ENCODE measurements at regions of chrX and their contacts with region 1.

Region 1: GRCh38 chrX:109709129-109709631 is 23.9 kb downstream of the ACSL4 start:
- DNase-seq: no peak
- H3K4me3 Mint-ChIP-seq: peak overlapping the region; percentile 45
- H3K27ac Mint-ChIP-seq: peak overlapping the region; percentile 73
- H3K4me1 Mint-ChIP-seq: peaks cover 54% of the 10 kb centered on the region
- H3K27me3 Mint-ChIP-seq: no peaks in the 10 kb centered on the region

Region 2: DNA sequence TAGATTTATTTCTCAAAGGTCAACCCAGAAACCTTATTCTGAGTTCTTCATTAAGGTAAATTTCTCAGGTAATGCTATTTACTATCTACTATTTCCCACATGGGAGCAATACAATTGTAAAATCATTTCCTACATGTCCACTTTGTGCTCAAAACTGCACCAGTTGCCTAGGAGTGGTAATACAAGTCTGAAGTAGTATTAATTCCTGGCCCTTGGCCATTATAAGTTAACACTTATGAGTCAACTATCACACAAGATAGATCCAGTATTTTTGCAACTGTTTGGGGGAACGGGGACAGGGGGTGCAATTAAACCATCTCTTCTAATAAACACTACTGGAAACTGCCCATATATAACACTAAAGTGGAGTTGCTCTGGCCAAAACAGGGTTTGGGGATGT is 25.0 kb before region 1 on chrX:
- intact Hi-C with region 1: no loop called
- DNase-seq: no peak
- H3K4me3 Mint-ChIP-seq: no peak overlapping the region
- H3K27ac Mint-ChIP-seq: no peak overlapping the region
- H3K4me1 Mint-ChIP-seq: peaks cover 13% of the 10 kb centered on the region
- H3K27me3 Mint-ChIP-seq: no peaks in the 10 kb centered on the region

Region 3: DNA sequence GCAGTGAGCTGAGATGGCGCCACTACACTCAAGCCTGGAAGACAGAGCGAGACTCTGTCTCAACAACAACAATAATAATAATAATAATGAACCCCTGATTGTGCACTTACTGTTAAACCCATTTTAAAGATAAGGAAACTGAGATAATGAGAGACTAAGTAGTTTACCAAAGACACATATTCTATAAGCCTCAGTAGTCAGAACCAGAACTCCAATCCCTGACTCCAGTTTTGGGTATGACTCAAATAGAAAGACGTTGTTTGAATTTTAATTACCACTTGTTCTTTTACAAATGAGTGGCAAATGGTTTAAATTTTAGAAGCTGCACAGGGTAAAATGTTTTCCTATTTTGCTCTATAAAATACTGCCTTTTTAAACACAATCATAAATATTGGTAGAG is 13.5 kb before region 1 on chrX:
- intact Hi-C with region 1: loop called (anchors 2 kb)
- DNase-seq: no peak
- H3K4me3 Mint-ChIP-seq: no peak overlapping the region
- H3K27ac Mint-ChIP-seq: no peak overlapping the region
- H3K4me1 Mint-ChIP-seq: peaks cover 31% of the 10 kb centered on the region
- H3K27me3 Mint-ChIP-seq: no peaks in the 10 kb centered on the region

Region 4: GRCh38 chrX:109732780-109733657 is 23.8 kb after region 1 on chrX and contains the start of gene ACSL4:
- intact Hi-C with region 1: loop called (anchors 1 kb)
- DNase-seq: peak; percentile 78
- H3K4me3 Mint-ChIP-seq: peak within 1 kb of the TSS; percentile 93
- H3K27ac Mint-ChIP-seq: peak within 1 kb of the TSS; percentile 95
- H3K4me1 Mint-ChIP-seq: peaks cover 29% of the 10 kb centered on the region
- H3K27me3 Mint-ChIP-seq: no peaks in the 10 kb centered on the region
- total RNA-seq, gene ACSL4: 101 and 102 TPM in 2 replicates

Region 5: GRCh38 chrX:109782994-109783700 is 74.0 kb after region 1 on chrX:
- intact Hi-C with region 1: loop called (anchors 5 kb)
- DNase-seq: no peak
- H3K4me3 Mint-ChIP-seq: peak overlapping the region; percentile 79
- H3K27ac Mint-ChIP-seq: peak overlapping the region; percentile 98
- H3K4me1 Mint-ChIP-seq: peaks cover 39% of the 10 kb centered on the region
- H3K27me3 Mint-ChIP-seq: no peaks in the 10 kb centered on the region

Region 6: GRCh38 chrX:109856974-109857373 is 147.8 kb after region 1 on chrX:
- intact Hi-C with region 1: loop called (anchors 1 kb)
- DNase-seq: no peak
- H3K4me3 Mint-ChIP-seq: no peak overlapping the region
- H3K27ac Mint-ChIP-seq: no peak overlapping the region
- H3K4me1 Mint-ChIP-seq: peaks cover 18% of the 10 kb centered on the region
- H3K27me3 Mint-ChIP-seq: no peaks in the 10 kb centered on the region

Region 7: DNA sequence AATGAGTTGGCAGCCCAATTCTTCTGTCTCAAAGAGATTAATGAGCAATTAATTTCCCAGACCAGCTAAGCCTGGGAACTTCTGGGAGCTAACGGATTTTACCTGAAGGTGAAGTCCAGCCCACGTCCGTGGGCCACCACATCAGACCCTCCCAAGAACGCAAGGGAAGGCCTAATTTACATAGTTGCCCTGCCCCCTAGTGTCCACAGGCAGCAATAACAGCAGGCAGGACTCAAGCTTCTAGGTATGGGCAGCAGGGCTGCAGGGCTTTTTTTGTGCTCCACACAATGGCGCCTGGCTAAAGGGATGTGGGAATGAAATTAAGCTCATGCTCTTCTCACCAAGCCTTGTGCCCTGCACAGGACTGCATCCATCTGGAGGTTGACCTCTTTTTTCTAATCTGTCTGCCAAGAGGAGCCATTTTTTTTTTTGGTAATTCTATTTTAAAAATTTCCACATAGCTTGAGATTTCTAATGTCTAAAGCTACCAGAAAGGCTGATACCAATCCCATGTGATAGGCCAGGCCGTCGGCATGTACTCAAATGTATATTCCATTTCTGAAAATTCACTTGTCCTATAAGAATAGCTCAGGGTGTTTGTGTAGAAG is 181.8 kb after region 1 on chrX:
- intact Hi-C with region 1: loop called (anchors 1 kb)
- DNase-seq: peak; percentile 13
- H3K4me3 Mint-ChIP-seq: no peak overlapping the region
- H3K27ac Mint-ChIP-seq: no peak overlapping the region
- H3K4me1 Mint-ChIP-seq: peaks cover 5% of the 10 kb centered on the region
- H3K27me3 Mint-ChIP-seq: peaks cover 3% of the 10 kb centered on the region